AG04449 (cell line): ENCODE measurements at regions of chr21 and their contacts with region 1.

Region 1: DNA sequence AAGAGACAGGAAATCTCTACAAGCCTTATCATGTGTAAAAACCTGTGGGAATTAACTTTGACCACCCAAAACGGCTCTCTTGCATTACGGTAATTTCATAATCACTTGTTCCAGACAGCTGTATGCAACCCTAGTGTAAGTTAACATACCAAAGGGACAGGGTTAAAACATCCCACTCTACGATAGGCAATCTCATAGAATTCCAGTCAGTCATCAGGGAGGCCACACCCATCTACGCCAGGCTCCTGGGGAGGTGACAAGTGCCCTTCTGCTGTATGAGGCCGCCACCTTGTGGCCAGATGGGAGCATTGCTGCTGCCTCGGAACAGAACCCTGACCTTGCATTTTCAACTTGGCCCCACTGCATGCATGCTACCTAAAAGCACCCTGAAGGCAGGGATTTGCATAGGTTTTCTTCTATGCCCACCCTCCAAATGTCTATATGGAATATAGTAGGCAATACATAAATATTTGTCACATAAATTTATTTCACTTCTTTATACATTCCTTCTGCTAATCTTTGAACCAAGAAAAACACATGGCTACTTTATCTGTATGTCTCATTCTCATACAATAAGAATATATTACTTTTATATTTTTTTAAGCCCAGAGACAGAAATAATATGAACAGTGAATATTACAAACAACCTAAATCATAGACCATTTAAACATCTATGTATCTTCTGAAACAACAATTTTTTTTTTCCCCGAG is 12.6 kb downstream of the HSF2BP start:
- DNase-seq: peak; percentile 60
- H3K4me3 ChIP-seq: no peak overlapping the region
- CTCF ChIP-seq: peak; percentile 99

Region 2: DNA sequence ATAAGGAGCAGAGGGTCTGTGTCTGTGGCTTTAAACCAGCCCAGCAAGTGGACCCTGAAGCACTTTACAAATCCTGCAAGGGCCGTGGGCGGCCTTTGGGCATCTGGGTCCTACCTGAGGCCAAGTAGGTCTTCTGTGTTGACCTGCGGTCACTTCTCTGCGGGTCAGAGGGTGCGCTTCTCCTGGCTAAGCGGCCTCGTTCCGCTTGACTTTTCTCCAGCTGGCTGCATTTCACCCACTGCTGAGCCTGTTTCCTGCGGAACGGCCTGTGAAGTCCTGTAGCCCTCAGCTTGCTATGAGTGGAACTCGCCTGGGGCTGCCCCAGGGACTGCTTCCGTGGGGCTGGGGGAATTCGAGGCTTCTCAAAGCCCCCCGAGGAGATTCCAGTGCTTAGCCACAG is 1089.7 kb before region 1 on chr21:
- CTCF ChIA-PET with region 1: no interaction called
- POLR2A ChIA-PET with region 1: no interaction called
- DNase-seq: no peak
- H3K4me3 ChIP-seq: no peak overlapping the region
- CTCF ChIP-seq: no peak

Region 3: DNA sequence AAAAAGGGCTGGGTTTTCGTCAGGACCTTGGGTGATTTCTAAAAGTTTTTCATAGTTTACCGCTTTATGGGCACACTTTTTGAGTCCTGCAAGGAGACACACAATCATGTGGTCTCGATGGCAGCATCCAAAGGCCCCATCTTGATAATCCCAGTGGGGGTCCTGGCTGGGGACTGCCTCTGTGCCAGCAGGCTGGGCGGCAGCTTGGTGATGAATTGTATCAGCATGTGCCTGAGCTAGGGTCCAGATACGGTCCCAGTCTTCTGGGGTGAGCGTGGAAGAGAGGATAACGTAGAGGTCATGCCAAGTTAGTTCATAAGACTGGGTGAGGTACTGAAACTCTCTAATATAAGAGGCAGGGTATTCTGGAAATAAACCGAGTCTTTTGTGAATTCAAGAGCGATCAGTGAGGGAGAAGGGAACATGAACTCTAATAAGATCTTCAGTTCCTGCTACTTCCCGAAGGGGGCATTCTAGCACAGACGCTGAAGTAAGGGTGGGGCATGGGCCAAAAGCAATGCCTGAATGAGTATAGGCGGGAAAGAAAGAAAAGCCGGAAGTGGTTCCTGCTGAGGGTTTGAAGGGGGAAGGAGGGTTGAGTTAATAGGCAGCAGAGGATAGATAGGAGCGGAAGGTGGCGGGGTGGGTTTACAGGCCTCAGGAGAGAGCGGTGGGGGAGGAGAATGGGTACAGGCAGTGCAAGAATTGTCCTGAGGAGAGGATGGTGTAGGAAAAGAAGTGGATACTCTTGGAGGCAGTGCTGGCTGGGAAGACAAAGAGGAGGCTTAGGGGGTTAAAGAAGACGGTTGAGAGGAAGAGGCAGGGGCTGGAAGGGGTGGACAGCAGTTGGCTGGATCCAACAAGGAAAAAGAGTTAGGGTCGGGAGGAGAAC is 722.9 kb before region 1 on chr21:
- CTCF ChIA-PET with region 1: no interaction called
- POLR2A ChIA-PET with region 1: no interaction called
- DNase-seq: peak; percentile 33
- H3K4me3 ChIP-seq: no peak overlapping the region
- CTCF ChIP-seq: peak; percentile 65

Region 4: GRCh38 chr21:43611598-43612369 is 34.9 kb before region 1 on chr21:
- CTCF ChIA-PET with region 1: interaction called, 27 read pairs
- POLR2A ChIA-PET with region 1: interaction called, 3 read pairs
- DNase-seq: no peak
- H3K4me3 ChIP-seq: no peak overlapping the region
- CTCF ChIP-seq: peak; percentile 74

Region 5: DNA sequence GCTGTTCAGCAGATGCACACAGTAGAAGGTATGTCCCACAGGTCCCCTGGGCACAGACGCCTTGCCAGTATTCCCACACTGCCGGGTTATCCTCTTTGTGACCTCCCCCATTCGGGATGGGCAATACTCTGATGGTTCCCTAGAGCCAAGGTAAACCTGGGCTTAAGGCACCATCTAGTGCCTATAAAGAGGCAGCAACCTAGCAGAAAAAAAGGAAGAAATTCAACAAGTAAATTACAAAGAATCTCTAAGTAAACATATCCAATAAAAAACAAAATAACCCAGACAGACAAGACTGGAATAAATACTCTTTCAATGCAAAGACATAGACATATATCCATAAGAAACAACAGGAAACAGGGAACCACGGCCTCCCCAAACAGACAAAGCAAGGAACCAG is 26.8 kb before region 1 on chr21:
- CTCF ChIA-PET with region 1: interaction called, 13 read pairs
- POLR2A ChIA-PET with region 1: no interaction called
- DNase-seq: no peak
- H3K4me3 ChIP-seq: no peak overlapping the region
- CTCF ChIP-seq: no peak

Region 6: DNA sequence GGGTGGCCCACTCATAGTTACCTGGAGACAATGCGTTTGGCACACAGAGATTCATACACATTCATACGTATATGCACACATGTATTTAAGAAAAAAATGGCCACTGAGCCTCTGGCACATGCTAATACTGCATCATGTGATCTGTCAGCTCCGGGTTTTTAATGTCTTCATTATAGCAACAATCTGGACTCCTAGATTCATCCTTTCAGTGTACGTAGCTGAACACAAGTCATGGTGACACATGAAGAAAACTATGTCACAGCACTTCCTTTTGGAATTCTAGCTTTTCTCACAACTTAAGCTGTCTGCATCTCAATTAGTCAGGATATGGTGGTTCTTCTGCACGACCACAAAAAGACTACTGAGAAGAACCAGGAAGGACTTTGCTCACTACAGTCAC is 12.1 kb before region 1 on chr21:
- CTCF ChIA-PET with region 1: interaction called, 10 read pairs
- POLR2A ChIA-PET with region 1: no interaction called
- DNase-seq: no peak
- H3K4me3 ChIP-seq: no peak overlapping the region
- CTCF ChIP-seq: no peak

Region 7: DNA sequence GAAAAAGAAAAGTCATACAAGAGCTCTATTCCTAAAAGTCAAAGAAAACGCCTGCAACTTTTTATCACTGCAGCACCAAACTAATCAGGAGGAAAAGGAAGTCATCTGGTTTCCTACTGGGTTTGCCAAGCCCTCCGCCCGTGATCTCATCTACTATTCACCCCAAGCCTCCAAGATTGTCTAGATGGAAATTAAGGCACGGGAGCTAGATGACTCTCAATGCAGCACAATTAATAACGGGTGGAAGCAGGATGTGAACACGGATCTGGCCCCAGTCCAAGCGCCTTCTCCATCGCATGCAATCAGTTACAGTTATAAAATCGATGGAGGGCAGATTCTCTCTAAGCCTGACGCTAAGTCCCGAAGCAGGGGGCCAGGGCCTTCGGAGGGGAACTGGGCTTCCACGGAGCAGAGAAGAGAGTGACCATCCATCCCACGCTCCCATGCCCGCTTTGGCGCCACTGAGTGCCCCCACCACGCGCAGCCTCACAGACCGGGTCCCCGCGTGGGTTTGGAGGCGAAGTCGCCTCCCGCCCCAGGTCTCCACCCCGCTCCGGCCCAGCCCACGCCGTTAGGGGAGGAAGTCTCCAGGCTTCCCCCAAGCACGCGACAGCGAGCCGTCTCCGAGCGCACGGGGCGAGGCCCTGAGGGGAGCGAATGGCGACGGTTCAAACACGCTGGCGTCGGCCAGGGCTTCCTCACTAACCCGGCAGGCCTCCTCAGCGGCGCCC is 10.8 kb after region 1 on chr21:
- CTCF ChIA-PET with region 1: interaction called, 15 read pairs
- POLR2A ChIA-PET with region 1: interaction called, 3 read pairs
- DNase-seq: no peak
- H3K4me3 ChIP-seq: no peak overlapping the region
- CTCF ChIP-seq: no peak